PC-3 (cell line): ENCODE measurements at regions of chr6 and their contacts with region 1.

Region 1: DNA sequence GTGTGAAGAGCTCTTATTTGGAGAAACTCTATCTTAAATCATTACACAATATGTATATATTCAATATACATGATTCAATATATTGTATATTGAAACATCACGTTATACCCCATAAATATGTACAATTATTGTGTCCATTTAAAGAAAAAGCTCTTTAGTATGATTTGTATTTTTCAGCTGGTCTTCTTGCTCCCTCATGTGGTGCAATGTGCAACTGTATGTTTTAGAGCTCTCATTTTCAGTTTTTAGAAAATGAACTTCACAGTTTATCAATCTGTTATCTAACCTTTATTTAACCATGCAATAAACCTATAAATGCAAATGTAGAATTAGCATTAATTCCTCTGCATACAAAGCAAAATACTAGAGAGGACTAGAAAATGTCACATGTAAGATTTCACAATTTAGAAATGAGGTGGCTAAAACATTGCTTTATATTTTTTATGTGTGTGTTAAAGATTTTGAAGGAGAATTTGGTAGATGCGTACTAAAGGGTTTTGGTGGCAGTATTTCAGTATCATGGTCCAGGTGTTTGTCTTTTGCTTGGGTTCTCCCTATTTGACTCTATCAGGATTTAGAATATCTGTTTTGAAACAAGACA is 167.1 kb downstream of the PHF3 start:
- DNase-seq: peak; percentile 51
- ATAC-seq: no peak
- H3K4me3 ChIP-seq: no peak overlapping the region
- H3K27ac ChIP-seq: peak overlapping the region; percentile 100
- H3K4me1 ChIP-seq: peaks cover 43% of the 10 kb centered on the region
- H3K27me3 ChIP-seq: no peaks in the 10 kb centered on the region
- CTCF ChIP-seq: peak; percentile 74

Region 2: DNA sequence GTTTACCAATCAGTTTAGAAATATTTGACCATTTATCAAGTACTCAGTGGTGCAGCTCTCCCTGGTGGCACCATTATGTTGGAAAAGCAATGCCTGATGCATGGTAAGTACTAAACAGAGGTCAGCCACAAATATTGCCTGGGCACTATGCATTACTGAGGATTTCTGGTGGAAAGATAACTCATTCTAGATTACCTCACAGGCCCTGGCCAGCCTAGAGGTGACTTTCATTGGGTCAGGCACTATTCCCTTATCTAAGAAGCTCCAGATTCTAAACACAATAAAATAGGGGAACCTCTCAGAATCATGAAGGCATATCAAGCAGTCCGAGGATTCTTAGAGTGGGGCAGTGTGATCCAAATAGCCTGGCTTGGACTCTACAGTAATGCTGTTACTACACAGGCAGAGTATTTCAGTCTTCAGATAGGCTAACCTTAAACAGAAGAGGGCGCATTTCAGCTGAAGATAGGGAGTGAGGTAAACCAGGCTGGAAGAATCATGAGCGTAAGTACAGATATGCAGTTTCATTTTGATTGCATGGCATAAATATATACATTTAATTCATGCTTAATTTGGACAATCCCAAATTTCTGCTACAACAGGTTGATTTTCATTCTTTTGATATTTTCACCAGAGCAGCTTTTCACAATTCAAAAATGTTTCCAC is 495.0 kb before region 1 on chr6:
- CTCF ChIA-PET with region 1: no interaction called
- POLR2A ChIA-PET with region 1: no interaction called
- intact Hi-C with region 1: loop called (anchors 1 kb)
- DNase-seq: peak; percentile 72
- ATAC-seq: peak; percentile 96
- H3K4me3 ChIP-seq: peak overlapping the region; percentile 47
- H3K27ac ChIP-seq: no peak overlapping the region
- H3K4me1 ChIP-seq: no peaks in the 10 kb centered on the region
- H3K27me3 ChIP-seq: no peaks in the 10 kb centered on the region
- CTCF ChIP-seq: peak; percentile 70

Region 3: DNA sequence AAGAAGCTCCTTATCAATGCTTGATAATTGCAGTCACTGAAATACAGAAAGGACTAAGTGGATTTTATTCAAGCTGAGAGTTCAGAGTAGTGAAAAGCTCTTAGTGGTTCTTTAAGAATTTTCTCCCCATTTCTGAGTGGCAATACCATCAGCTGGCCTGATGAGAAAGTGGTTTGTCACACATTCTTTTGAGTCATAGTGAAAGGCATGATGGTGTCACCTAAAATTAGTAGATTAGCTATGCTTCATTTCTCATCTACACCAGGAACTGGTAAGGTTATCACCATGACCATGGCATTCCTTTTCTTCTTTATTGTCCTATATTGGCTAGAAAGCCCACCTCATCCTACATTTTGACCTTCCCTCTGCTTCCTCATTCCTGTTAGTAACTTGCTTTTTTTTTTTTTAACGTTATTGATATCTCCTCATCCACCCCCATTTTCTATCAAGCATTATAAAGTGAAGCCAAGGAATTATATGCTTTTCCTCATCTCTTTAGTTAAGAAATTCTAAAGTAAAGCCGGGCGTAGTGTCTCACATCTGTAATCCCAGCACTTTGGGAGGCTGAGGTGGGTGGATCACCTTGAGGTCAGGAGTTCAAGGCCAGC is 297.8 kb before region 1 on chr6:
- CTCF ChIA-PET with region 1: interaction called, 3 read pairs
- POLR2A ChIA-PET with region 1: interaction called, 13 read pairs
- intact Hi-C with region 1: no loop called
- DNase-seq: peak; percentile 27
- ATAC-seq: no peak
- H3K4me3 ChIP-seq: no peak overlapping the region
- H3K27ac ChIP-seq: no peak overlapping the region
- H3K4me1 ChIP-seq: peaks cover 13% of the 10 kb centered on the region
- H3K27me3 ChIP-seq: no peaks in the 10 kb centered on the region
- CTCF ChIP-seq: no peak

Region 4: GRCh38 chr6:63598049-63599036 is 204.4 kb before region 1 on chr6:
- CTCF ChIA-PET with region 1: interaction called, 11 read pairs
- POLR2A ChIA-PET with region 1: no interaction called
- intact Hi-C with region 1: loop called (anchors 2 kb)
- DNase-seq: peak; percentile 65
- ATAC-seq: peak; percentile 95
- H3K4me3 ChIP-seq: peak overlapping the region; percentile 87
- H3K27ac ChIP-seq: no peak overlapping the region
- H3K4me1 ChIP-seq: peaks cover 6% of the 10 kb centered on the region; the same call in 1 of the 2 replicates
- H3K27me3 ChIP-seq: no peaks in the 10 kb centered on the region
- CTCF ChIP-seq: peak; percentile 80

Region 5: GRCh38 chr6:63864671-63865318 is 62.1 kb after region 1 on chr6:
- CTCF ChIA-PET with region 1: no interaction called
- POLR2A ChIA-PET with region 1: interaction called, 3 read pairs
- intact Hi-C with region 1: loop called (anchors 1 kb)
- DNase-seq: no peak
- ATAC-seq: no peak
- H3K4me3 ChIP-seq: no peak overlapping the region
- H3K27ac ChIP-seq: no peak overlapping the region
- H3K4me1 ChIP-seq: peaks cover 15% of the 10 kb centered on the region
- H3K27me3 ChIP-seq: no peaks in the 10 kb centered on the region
- CTCF ChIP-seq: no peak

Region 6: GRCh38 chr6:64792534-64792933 is 989.8 kb after region 1 on chr6:
- CTCF ChIA-PET with region 1: no interaction called
- POLR2A ChIA-PET with region 1: no interaction called
- intact Hi-C with region 1: no loop called
- DNase-seq: no peak
- ATAC-seq: no peak
- H3K4me3 ChIP-seq: no peak overlapping the region
- H3K27ac ChIP-seq: no peak overlapping the region
- H3K4me1 ChIP-seq: no peaks in the 10 kb centered on the region
- H3K27me3 ChIP-seq: no peaks in the 10 kb centered on the region
- CTCF ChIP-seq: no peak